A673 (cell line): ENCODE measurements at regions of chr17 and their contacts with region 1.

Region 1: DNA sequence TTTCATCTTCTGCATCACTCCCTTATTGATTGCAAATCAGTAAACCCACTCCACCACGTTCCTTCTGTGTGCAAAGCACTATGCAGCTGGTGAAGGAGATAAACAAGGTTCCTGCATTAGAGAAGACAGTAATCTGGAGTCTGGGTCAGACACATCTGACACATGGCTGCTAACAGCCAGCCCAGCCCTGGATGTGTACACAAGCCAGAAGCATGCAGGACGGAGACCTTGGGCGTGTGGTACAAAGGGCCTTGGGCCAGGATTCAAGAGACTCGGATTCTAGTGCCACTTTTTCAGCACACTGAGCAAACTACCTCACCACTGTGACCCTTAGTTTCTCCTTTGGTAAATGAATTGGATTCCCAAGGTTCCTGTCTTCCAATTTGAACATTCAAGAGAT is 86.6 kb upstream of the DNAH9 start:
- DNase-seq: no peak
- H3K4me3 ChIP-seq: no peak overlapping the region
- H3K27ac ChIP-seq: peak overlapping the region; percentile 69
- H3K4me1 ChIP-seq: peaks cover 57% of the 10 kb centered on the region
- H3K27me3 ChIP-seq: no peaks in the 10 kb centered on the region
- CTCF ChIP-seq: no peak

Region 2: DNA sequence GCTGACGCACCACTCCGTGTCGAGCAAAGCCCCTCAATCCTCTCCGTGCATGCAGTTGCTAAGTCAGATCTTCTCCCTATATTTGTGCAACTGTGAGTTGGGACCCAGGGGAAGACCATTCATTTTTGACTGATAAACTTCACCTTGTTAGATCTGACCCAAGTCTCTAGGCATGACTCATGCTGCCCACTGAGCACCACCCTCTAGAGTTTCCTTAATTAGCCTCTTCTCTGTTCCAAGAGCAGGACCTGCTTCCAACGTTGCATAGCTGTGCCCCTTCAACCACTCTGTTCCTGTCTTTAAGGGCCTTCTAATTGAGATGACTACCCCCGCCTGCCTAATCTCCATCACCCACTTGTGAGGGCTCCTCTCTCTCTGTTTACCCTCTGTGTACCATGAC is 1141.5 kb before region 1 on chr17:
- CTCF ChIA-PET with region 1: no interaction called
- POLR2A ChIA-PET with region 1: interaction called, 10 read pairs
- intact Hi-C with region 1: no loop called
- DNase-seq: no peak
- H3K4me3 ChIP-seq: no peak overlapping the region
- H3K27ac ChIP-seq: no peak overlapping the region
- H3K4me1 ChIP-seq: no peaks in the 10 kb centered on the region
- H3K27me3 ChIP-seq: no peaks in the 10 kb centered on the region
- CTCF ChIP-seq: no peak

Region 3: DNA sequence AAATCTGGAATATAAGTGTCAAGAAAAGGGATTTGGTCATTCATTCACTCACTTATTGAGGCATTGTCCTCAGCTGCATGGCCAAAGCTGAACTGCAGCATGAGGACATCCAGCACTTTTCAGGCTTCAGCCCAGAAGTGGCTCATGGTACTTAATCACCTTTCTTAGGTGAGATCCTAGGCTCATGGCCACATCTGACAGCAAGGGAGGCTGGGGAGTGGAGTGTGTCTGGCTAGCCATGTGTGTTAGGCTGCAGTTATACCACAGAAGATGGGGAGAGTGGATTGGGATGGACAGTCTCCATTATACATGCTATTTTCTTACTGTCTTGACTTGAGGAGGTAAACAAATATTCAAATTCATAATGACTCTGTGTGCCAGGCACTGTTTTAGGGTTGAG is 201.8 kb before region 1 on chr17:
- CTCF ChIA-PET with region 1: no interaction called
- POLR2A ChIA-PET with region 1: interaction called, 25 read pairs
- intact Hi-C with region 1: no loop called
- DNase-seq: no peak
- H3K4me3 ChIP-seq: no peak overlapping the region
- H3K27ac ChIP-seq: no peak overlapping the region
- H3K4me1 ChIP-seq: peaks cover 3% of the 10 kb centered on the region
- H3K27me3 ChIP-seq: no peaks in the 10 kb centered on the region
- CTCF ChIP-seq: no peak

Region 4: DNA sequence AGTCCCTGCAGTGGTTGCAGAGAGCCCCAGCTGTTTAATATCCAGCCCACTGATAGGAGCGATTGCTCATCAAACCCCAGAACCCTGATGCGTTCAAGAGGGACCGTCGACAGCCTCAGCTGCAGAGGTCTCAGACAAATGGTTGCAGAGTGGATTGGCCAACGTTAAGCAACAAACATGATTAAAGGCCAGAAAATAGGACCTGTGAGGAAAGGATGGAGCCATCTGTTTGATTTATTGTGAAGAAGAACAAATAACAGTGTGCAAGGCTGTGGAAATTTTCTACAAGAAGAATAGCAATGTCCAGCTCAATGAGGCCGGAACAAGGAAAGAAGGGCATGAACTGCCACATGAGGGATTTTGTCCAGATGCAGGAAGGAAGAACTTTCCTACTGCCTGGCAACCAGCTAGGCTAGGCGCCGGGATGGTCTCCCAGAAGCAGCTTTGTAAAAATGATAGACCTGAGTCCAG is 51.8 kb before region 1 on chr17:
- CTCF ChIA-PET with region 1: no interaction called
- POLR2A ChIA-PET with region 1: no interaction called
- intact Hi-C with region 1: no loop called
- DNase-seq: no peak
- H3K4me3 ChIP-seq: no peak overlapping the region
- H3K27ac ChIP-seq: no peak overlapping the region
- H3K4me1 ChIP-seq: peaks cover 9% of the 10 kb centered on the region
- H3K27me3 ChIP-seq: no peaks in the 10 kb centered on the region
- CTCF ChIP-seq: no peak

Region 5: GRCh38 chr17:11495613-11496012 is 16.1 kb before region 1 on chr17:
- CTCF ChIA-PET with region 1: no interaction called
- POLR2A ChIA-PET with region 1: no interaction called
- intact Hi-C with region 1: loop called (anchors 2 kb)
- DNase-seq: peak; percentile 95
- H3K4me3 ChIP-seq: no peak overlapping the region
- H3K27ac ChIP-seq: peak overlapping the region; percentile 65
- H3K4me1 ChIP-seq: peaks cover 48% of the 10 kb centered on the region
- H3K27me3 ChIP-seq: no peaks in the 10 kb centered on the region
- CTCF ChIP-seq: no peak

Region 6: DNA sequence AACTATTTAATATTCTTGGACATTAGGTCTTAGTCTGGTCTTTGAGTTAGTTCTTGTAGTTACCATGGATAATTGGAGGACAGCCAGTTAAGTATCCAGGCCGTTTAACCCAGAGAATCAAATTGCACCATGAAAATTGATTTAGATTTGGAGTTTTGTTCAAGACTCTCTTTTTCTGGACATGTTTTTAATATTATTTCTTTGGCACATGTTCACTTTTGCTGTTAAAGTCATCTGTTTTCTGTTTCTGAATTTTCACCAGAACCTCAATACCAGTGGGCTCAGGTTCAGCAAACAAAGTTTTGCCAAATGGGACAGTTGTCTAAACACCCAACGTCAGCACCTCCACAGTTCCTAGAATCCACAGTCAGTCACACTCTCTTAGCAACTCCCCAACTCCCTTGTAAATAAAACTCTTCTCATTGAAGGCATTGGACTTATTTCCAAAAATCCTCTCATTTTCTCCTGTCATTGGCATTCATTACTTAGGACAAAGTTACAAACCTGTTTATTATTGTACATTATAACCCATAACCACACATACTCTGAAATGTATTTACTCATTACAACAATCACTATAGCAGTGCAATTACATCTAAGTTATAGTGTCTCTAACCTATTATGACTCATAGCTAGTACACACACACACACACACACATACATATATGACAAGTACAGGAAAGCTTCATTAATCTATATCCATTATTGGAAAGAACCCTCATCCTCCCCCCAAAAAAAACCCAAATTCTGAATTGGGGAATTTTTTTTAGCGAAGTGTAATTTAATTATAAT is 53.1 kb after region 1 on chr17:
- CTCF ChIA-PET with region 1: no interaction called
- POLR2A ChIA-PET with region 1: no interaction called
- intact Hi-C with region 1: no loop called
- DNase-seq: no peak
- H3K4me3 ChIP-seq: no peak overlapping the region
- H3K27ac ChIP-seq: peak overlapping the region; percentile 47
- H3K4me1 ChIP-seq: peaks cover 20% of the 10 kb centered on the region
- H3K27me3 ChIP-seq: no peaks in the 10 kb centered on the region
- CTCF ChIP-seq: no peak

Region 7: DNA sequence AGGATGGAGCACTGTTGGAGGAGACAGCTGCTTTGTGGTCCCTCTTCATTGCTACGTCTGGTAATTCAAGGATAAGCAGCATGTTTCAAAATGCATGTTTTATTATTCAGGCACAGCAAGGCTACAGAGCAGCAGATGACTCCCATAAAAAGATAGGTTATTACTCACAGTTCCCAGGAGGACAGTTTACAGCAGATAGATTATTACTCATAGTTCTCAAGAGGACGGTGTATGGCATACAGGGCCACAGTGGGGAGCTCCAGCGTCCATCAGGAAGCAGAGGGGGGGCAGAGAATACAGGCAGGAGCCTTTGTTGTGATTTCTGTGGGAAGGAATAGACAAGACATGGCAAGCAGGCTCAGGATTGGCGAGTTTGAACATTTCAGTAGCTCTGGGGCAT is 159.4 kb after region 1 on chr17:
- CTCF ChIA-PET with region 1: no interaction called
- POLR2A ChIA-PET with region 1: no interaction called
- intact Hi-C with region 1: no loop called
- DNase-seq: peak; percentile 84
- H3K4me3 ChIP-seq: no peak overlapping the region
- H3K27ac ChIP-seq: no peak overlapping the region
- H3K4me1 ChIP-seq: no peaks in the 10 kb centered on the region
- H3K27me3 ChIP-seq: no peaks in the 10 kb centered on the region
- CTCF ChIP-seq: no peak

Region 8: GRCh38 chr17:11730747-11731146 is 219.1 kb after region 1 on chr17:
- CTCF ChIA-PET with region 1: no interaction called
- POLR2A ChIA-PET with region 1: interaction called, 19 read pairs
- intact Hi-C with region 1: no loop called
- DNase-seq: no peak
- H3K4me3 ChIP-seq: no peak overlapping the region
- H3K27ac ChIP-seq: no peak overlapping the region
- H3K4me1 ChIP-seq: no peaks in the 10 kb centered on the region
- H3K27me3 ChIP-seq: no peaks in the 10 kb centered on the region
- CTCF ChIP-seq: no peak

Region 9: DNA sequence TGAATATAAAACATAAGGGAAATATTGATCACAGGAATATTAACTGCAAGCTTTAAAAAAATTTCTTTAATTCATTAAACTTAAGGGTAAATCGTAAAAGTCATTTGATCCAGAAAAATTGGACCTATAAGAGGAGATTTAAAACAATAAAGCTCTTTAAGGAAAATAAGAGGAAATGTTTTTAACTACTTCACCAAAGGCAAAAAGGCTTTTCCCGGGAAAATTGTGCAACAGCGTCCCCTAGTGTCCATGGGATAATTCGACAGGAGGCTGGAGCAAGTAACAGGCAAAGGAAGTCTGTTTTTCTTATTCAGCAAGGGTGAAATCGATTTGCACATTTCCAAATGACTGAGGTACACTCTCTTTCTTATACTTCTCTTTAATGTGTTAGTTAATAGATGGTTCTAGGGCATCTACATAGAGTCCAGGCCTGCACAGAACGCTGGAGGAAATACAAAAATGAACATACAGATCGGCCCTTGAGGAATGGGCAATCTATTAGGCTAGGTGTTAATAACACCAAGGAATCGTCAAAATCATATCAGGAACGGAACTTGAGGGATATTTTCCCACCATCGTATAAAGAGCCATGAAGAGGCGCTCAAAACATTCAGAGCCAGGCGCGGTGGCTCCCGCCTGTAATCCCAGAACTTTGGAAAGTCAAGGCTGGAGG is 424.2 kb after region 1 on chr17:
- CTCF ChIA-PET with region 1: no interaction called
- POLR2A ChIA-PET with region 1: no interaction called
- intact Hi-C with region 1: loop called (anchors 10 kb)
- DNase-seq: peak; percentile 88
- H3K4me3 ChIP-seq: no peak overlapping the region
- H3K27ac ChIP-seq: no peak overlapping the region
- H3K4me1 ChIP-seq: no peaks in the 10 kb centered on the region
- H3K27me3 ChIP-seq: no peaks in the 10 kb centered on the region
- CTCF ChIP-seq: peak; percentile 97